ENCODE measurements at regions of chr17 and their contacts with region 1.

Region 1: DNA sequence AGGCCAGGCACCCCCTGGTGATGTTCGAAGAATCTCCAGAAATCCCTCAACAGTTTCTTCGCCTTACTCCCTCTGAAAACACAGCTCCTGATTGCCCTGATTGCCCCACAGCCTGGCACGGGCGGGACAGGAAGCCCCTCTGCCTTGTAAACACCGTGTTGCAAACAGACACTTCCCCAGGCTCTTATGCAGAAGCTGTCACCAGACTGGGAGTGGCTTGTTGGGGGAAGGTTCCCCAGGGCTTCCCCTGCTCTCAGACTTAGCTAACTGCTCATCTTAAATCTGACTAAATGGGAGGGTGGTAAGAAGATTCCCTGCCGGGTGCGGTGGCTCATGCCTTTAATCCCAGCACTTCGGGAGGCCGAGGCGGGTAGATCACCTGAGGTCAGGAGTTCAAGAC is 11.2 kb downstream of the PIK3R5 start:
- DNase-seq: peak; percentile 82
- ATAC-seq: peak; percentile 86
- H3K4me3 Mint-ChIP-seq: peak overlapping the region; percentile 53
- H3K27ac Mint-ChIP-seq: peak overlapping the region; percentile 87
- H3K4me1 Mint-ChIP-seq: peaks cover 96% of the 10 kb centered on the region
- H3K27me3 Mint-ChIP-seq: no peaks in the 10 kb centered on the region

Region 2: GRCh38 chr17:8727065-8727511 is 227.3 kb before region 1 on chr17:
- CTCF ChIA-PET with region 1: no interaction called
- POLR2A ChIA-PET with region 1: no interaction called
- DNase-seq: no peak
- ATAC-seq: no peak
- H3K4me3 Mint-ChIP-seq: no peak overlapping the region
- H3K27ac Mint-ChIP-seq: no peak overlapping the region
- H3K4me1 Mint-ChIP-seq: no peaks in the 10 kb centered on the region
- H3K27me3 Mint-ChIP-seq: peaks cover 5% of the 10 kb centered on the region

Region 3: GRCh38 chr17:8826808-8827435 is 127.4 kb before region 1 on chr17:
- CTCF ChIA-PET with region 1: no interaction called
- POLR2A ChIA-PET with region 1: no interaction called
- DNase-seq: no peak
- ATAC-seq: no peak
- H3K4me3 Mint-ChIP-seq: no peak overlapping the region
- H3K27ac Mint-ChIP-seq: peak overlapping the region; percentile 11
- H3K4me1 Mint-ChIP-seq: peaks cover 5% of the 10 kb centered on the region
- H3K27me3 Mint-ChIP-seq: no peaks in the 10 kb centered on the region

Region 4: GRCh38 chr17:8941520-8941919 is 12.8 kb before region 1 on chr17:
- CTCF ChIA-PET with region 1: interaction called, 8 read pairs
- POLR2A ChIA-PET with region 1: interaction called, 25 read pairs
- DNase-seq: peak; percentile 83
- ATAC-seq: peak; percentile 79
- H3K4me3 Mint-ChIP-seq: peak overlapping the region; percentile 63
- H3K27ac Mint-ChIP-seq: peak overlapping the region; percentile 89
- H3K4me1 Mint-ChIP-seq: peaks cover 90% of the 10 kb centered on the region
- H3K27me3 Mint-ChIP-seq: no peaks in the 10 kb centered on the region

Region 5: GRCh38 chr17:8986290-8986689 is 32.0 kb after region 1 on chr17:
- CTCF ChIA-PET with region 1: no interaction called
- POLR2A ChIA-PET with region 1: no interaction called
- DNase-seq: no peak
- ATAC-seq: no peak
- H3K4me3 Mint-ChIP-seq: no peak overlapping the region
- H3K27ac Mint-ChIP-seq: peak overlapping the region; percentile 56
- H3K4me1 Mint-ChIP-seq: peaks cover 13% of the 10 kb centered on the region
- H3K27me3 Mint-ChIP-seq: no peaks in the 10 kb centered on the region

Region 6: GRCh38 chr17:9021158-9021991 is 67.0 kb after region 1 on chr17 and contains the start of gene NTN1:
- CTCF ChIA-PET with region 1: no interaction called
- POLR2A ChIA-PET with region 1: no interaction called
- DNase-seq: peak; percentile 49
- ATAC-seq: peak; percentile 77
- H3K4me3 Mint-ChIP-seq: peak within 1 kb of the TSS; percentile 71
- H3K27ac Mint-ChIP-seq: no peak within 1 kb of the TSS
- H3K4me1 Mint-ChIP-seq: peaks cover 8% of the 10 kb centered on the region
- H3K27me3 Mint-ChIP-seq: peaks cover 52% of the 10 kb centered on the region
- total RNA-seq, gene NTN1: not detected